HepG2 (cell line): ENCODE measurements at regions of chr4 and their contacts with region 1.

Region 1: GRCh38 chr4:132592340-132592739 is 556.8 kb upstream of the PCDH10 start:
- DNase-seq: peak; percentile 16
- ATAC-seq: peak; percentile 76
- H3K4me3 ChIP-seq: no peak overlapping the region
- H3K27ac ChIP-seq: no peak overlapping the region
- H3K4me1 ChIP-seq: no peaks in the 10 kb centered on the region
- H3K27me3 ChIP-seq: no peaks in the 10 kb centered on the region
- CTCF ChIP-seq: peak; percentile 34
- EP300 ChIP-seq: no peak
- POLR2A ChIP-seq: no peak
- RAD21 ChIP-seq: no peak

Region 2: DNA sequence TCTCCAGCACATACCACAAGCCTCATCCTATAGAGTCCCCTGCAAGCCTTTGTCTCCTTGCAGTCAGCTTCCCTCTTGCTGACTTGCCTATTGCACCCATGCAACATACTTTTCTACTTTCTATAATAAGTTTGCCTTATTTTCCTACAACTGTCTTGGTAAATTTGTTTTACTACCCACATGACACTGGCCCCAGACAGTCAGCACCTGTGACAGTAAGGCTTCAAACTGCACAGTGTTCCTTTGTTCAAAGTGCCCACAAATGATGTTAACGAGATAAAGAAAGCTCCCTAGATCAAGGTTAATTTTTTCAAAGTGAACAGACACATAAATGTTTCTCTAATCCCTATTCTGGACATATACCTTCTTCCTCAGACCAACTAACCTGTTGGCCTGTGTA is 27.6 kb after region 1 on chr4:
- CTCF ChIA-PET with region 1: no interaction called
- POLR2A ChIA-PET with region 1: no interaction called
- in situ Hi-C with region 1: no loop called
- intact Hi-C with region 1: loop called (anchors 1 kb)
- DNase-seq: no peak
- ATAC-seq: no peak
- H3K4me3 ChIP-seq: no peak overlapping the region
- H3K27ac ChIP-seq: no peak overlapping the region
- H3K4me1 ChIP-seq: no peaks in the 10 kb centered on the region
- H3K27me3 ChIP-seq: no peaks in the 10 kb centered on the region
- CTCF ChIP-seq: no peak
- EP300 ChIP-seq: no peak
- POLR2A ChIP-seq: no peak
- RAD21 ChIP-seq: no peak